Dorsolateral prefrontal cortex (tissue), 120 donors: ENCODE measurements at regions of chr12 and their contacts with region 1.

Region 1: GRCh38 chr12:74111688-74112360 is 425.8 kb upstream of the ATXN7L3B start:
- DNase-seq: peak in 4 of 10 donors; percentile 31 to 61 (median 46)
- H3K4me3 ChIP-seq: no peak overlapping the region
- H3K27ac ChIP-seq: no peak overlapping the region
- H3K27me3 ChIP-seq: no peaks in the 10 kb centered on the region
- CTCF ChIP-seq: peak in 49 of 56 donors; percentile 10 to 67 (median 42)

Region 2: GRCh38 chr12:74317078-74317601 is 205.3 kb after region 1 on chr12:
- intact Hi-C with region 1: loop called in 1 of 2 experiments (anchors 10 kb)
- DNase-seq: peak in 4 of 10 donors; percentile 10 to 64 (median 48)
- H3K4me3 ChIP-seq: no peak overlapping the region
- H3K27ac ChIP-seq: peak overlapping the region in 41 of 59 donors; percentile 2 to 81 (median 56)
- H3K27me3 ChIP-seq: no peaks in the 10 kb centered on the region
- CTCF ChIP-seq: peak in 54 of 56 donors; percentile 32 to 68 (median 54)

Region 3: GRCh38 chr12:74646831-74647230 is 535.0 kb after region 1 on chr12:
- intact Hi-C with region 1: loop called in 1 of 2 experiments (anchors 2 kb)
- DNase-seq: no peak
- H3K4me3 ChIP-seq: peak overlapping the region in 2 of 59 donors; percentile 1 to 20
- H3K27ac ChIP-seq: peak overlapping the region in 48 of 59 donors; percentile 3 to 82 (median 64)
- H3K27me3 ChIP-seq: no peaks in the 10 kb centered on the region
- CTCF ChIP-seq: peak in 55 of 56 donors; percentile 28 to 80 (median 59)